Activated CD4-positive, alpha-beta memory T cell treated with anti-CD3 and anti-CD28 coated beads for 36 hours (primary cell): ENCODE measurements at regions of chr1 and their contacts with region 1.

Region 1: GRCh38 chr1:172745014-172745413 is 86.1 kb downstream of the FASLG start:
- DNase-seq: peak; percentile 26
- H3K4me3 Mint-ChIP-seq: no peak overlapping the region
- H3K27ac Mint-ChIP-seq: peak overlapping the region; percentile 4
- H3K4me1 Mint-ChIP-seq: peaks cover 29% of the 10 kb centered on the region
- H3K27me3 Mint-ChIP-seq: peaks cover 9% of the 10 kb centered on the region

Region 2: GRCh38 chr1:172778456-172779455 is 33.7 kb after region 1 on chr1:
- CTCF ChIA-PET with region 1: interaction called, 25 read pairs
- POLR2A ChIA-PET with region 1: interaction called, 11 read pairs
- intact Hi-C with region 1: loop called (anchors 2 kb)
- DNase-seq: no peak
- H3K4me3 Mint-ChIP-seq: no peak overlapping the region
- H3K27ac Mint-ChIP-seq: no peak overlapping the region
- H3K4me1 Mint-ChIP-seq: peaks cover 13% of the 10 kb centered on the region
- H3K27me3 Mint-ChIP-seq: peaks cover 6% of the 10 kb centered on the region

Region 3: DNA sequence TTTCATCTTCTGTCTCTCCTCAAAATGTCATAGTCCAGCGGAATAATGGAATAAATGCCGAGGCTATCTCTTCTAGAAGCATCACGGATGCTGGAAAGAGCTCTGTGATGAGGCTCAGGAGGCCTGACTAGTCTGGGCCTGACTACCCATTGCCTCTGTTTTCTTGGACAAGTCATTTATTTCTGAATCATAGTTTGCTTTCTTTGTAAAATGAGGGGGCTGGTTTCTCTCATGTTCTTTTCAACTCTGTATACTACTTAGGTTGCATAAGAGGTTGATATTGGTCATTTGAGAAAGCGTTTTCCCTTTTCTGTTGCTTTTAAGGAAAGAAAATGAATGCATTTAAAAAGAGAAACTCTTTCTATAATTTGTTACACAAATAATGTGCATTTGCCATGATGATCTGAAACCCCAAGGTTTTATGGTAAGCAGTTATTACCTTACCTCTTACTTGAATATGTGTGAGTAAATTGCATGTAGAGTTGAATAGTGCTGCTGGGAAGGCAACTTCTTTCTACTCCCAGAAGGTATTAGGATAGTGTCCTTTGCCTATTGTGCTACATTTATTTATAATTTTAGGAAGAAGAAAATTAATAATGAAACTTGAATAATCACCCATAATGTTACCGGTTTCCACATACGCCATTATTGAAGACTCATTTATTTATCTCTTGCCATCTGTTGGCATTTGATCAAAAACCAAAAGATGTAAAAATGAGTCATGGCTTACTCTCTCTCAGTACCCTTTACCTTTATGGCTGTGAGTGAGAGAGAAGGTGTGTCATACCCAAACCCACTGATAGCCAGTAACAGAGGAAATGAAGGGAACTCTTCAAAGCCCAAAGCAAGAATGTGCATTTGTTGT is 93.0 kb after region 1 on chr1:
- CTCF ChIA-PET with region 1: interaction called, 9 read pairs
- POLR2A ChIA-PET with region 1: no interaction called
- intact Hi-C with region 1: loop called (anchors 1 kb)
- DNase-seq: peak; percentile 15
- H3K4me3 Mint-ChIP-seq: no peak overlapping the region
- H3K27ac Mint-ChIP-seq: no peak overlapping the region
- H3K4me1 Mint-ChIP-seq: peaks cover 27% of the 10 kb centered on the region
- H3K27me3 Mint-ChIP-seq: peaks cover 33% of the 10 kb centered on the region

Region 4: GRCh38 chr1:172895050-172895460 is 150.0 kb after region 1 on chr1:
- CTCF ChIA-PET with region 1: interaction called, 29 read pairs
- POLR2A ChIA-PET with region 1: no interaction called
- intact Hi-C with region 1: loop called (anchors 5 kb)
- DNase-seq: peak; percentile 29
- H3K4me3 Mint-ChIP-seq: peak overlapping the region; percentile 54
- H3K27ac Mint-ChIP-seq: peak overlapping the region; percentile 14
- H3K4me1 Mint-ChIP-seq: peaks cover 38% of the 10 kb centered on the region
- H3K27me3 Mint-ChIP-seq: peaks cover 18% of the 10 kb centered on the region

Region 5: GRCh38 chr1:173202430-173203145 is 457.6 kb after region 1 on chr1:
- CTCF ChIA-PET with region 1: interaction called, 166 read pairs
- POLR2A ChIA-PET with region 1: interaction called, 3 read pairs
- intact Hi-C with region 1: loop called (anchors 1 kb)
- DNase-seq: no peak
- H3K4me3 Mint-ChIP-seq: no peak overlapping the region
- H3K27ac Mint-ChIP-seq: no peak overlapping the region
- H3K4me1 Mint-ChIP-seq: peaks cover 32% of the 10 kb centered on the region
- H3K27me3 Mint-ChIP-seq: peaks cover 3% of the 10 kb centered on the region

Region 6: GRCh38 chr1:173420330-173420806 is 675.4 kb after region 1 on chr1:
- CTCF ChIA-PET with region 1: interaction called, 9 read pairs
- POLR2A ChIA-PET with region 1: no interaction called
- intact Hi-C with region 1: loop called (anchors 2 kb)
- DNase-seq: peak; percentile 72
- H3K4me3 Mint-ChIP-seq: no peak overlapping the region
- H3K27ac Mint-ChIP-seq: no peak overlapping the region
- H3K4me1 Mint-ChIP-seq: peaks cover 8% of the 10 kb centered on the region
- H3K27me3 Mint-ChIP-seq: no peaks in the 10 kb centered on the region

Region 7: GRCh38 chr1:173867753-173868265 is 1122.8 kb after region 1 on chr1 and contains the start of gene GAS5:
- CTCF ChIA-PET with region 1: no interaction called
- POLR2A ChIA-PET with region 1: no interaction called
- intact Hi-C with region 1: loop called (anchors 5 kb)
- DNase-seq: peak; percentile 100
- H3K4me3 Mint-ChIP-seq: peak within 1 kb of the TSS; percentile 99
- H3K27ac Mint-ChIP-seq: peak within 1 kb of the TSS; percentile 98
- H3K4me1 Mint-ChIP-seq: peaks cover 68% of the 10 kb centered on the region
- H3K27me3 Mint-ChIP-seq: peaks cover 3% of the 10 kb centered on the region
- total RNA-seq, gene GAS5: 913 to 929 TPM